CD8-positive, alpha-beta T cell (primary cell): ENCODE measurements at regions of chr10 and their contacts with region 1.

Region 1: DNA sequence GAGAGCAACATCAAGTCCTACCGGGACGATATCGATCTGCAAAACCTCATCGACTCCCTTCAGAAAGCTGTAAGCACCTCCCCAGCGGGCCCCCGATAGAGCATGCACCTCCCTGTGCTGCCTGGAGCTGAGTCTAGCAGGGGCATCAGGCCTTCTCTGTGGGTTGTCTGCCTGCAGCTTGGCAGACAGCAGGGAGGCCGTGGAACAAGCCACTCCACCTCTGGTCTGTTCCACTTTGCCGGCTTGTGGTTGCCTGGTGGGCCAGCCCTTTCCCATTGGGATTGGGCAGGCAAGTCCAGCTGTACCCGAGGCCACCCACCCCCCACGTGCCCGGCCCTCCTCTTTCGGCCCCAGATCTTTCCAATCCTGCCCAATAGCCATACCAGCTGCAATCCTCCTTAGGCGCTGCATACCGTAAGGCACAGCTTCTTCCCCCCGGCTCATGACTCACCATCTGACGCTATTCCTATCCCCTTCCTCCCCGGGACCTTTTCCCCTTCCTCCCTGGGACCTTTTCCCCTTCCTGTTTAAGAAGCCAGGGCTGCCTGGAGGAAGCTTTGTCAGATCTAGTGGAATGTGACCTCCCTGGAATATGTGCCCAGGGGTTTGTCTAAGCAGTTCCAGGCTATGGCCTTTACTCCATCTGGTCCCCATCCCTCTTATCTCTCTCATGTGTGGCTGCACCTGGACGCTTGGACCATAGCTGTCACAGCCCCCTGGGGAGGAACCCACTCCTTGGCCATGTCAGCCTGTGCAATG is 28.1 kb upstream of the SH2D4B start:
- DNase-seq: no peak
- ATAC-seq: no peak
- H3K4me3 ChIP-seq: no peak overlapping the region
- H3K4me3 Mint-ChIP-seq: no peak overlapping the region
- H3K27ac ChIP-seq: no peak overlapping the region
- H3K27ac Mint-ChIP-seq: peak overlapping the region; percentile 79
- H3K4me1 ChIP-seq: peaks cover 32% of the 10 kb centered on the region
- H3K4me1 Mint-ChIP-seq: peaks cover 42% of the 10 kb centered on the region
- H3K27me3 ChIP-seq: no peaks in the 10 kb centered on the region
- H3K27me3 Mint-ChIP-seq: no peaks in the 10 kb centered on the region
- CTCF ChIP-seq: no peak

Region 2: DNA sequence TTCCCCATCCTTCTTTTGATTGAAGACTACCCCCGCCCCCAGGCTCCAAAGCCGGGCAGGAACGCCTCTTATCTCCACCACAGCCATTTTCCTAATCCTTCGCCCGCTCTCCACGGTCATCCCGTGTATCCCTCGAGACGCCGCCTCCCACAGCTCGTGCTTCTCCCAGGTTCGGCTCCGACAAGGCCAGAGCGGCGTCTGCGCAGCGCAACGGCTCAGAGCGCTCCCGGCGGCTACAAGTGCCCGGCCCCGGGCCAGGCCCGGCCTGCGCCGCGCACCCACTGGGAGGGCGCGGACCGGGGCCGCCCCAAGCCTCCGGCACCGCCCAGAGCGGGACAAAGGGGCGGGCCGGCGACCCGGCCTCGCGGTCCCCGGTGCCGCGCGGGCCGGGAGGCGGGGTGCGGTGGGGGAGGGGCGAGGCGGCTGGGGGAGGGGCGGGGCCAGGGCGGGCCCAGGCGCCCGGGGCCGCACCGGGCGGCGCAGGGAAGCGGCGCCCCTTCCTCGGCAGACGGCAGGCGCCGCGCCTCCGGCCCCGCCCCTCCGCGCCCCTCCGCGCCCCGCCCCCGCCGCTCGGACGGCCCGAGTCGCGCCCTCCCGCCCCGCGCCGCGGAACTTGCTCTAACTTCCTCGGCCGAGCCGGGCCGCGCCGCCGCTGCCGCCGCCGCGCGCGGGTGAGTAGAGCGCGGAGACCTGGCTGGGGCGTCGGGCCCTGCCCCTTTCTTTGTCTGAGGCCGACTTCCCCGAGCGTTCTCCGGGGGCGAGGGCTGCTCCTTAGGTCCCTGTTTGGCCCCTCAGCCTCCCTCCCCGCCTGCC is 55.7 kb before region 1 on chr10 and contains the start of gene TSPAN14:
- CTCF ChIA-PET with region 1: interaction called, 562 read pairs
- POLR2A ChIA-PET with region 1: interaction called, 30 read pairs
- intact Hi-C with region 1: loop called in 1 of 2 experiments (anchors 2 kb)
- DNase-seq: peak; percentile 32 to 88 (median 73)
- ATAC-seq: peak; percentile 65
- H3K4me3 ChIP-seq: peak within 1 kb of the TSS; percentile 75 to 92
- H3K4me3 Mint-ChIP-seq: peak within 1 kb of the TSS; percentile 99
- H3K27ac ChIP-seq: peak within 1 kb of the TSS; percentile 53 to 74
- H3K27ac Mint-ChIP-seq: peak within 1 kb of the TSS; percentile 98
- H3K4me1 ChIP-seq: peaks cover 42% of the 10 kb centered on the region
- H3K4me1 Mint-ChIP-seq: peaks cover 41% of the 10 kb centered on the region
- H3K27me3 ChIP-seq: no peaks in the 10 kb centered on the region
- H3K27me3 Mint-ChIP-seq: no peaks in the 10 kb centered on the region
- CTCF ChIP-seq: no peak
- total RNA-seq, gene TSPAN14: 63.9 to 66.1 TPM

Region 3: DNA sequence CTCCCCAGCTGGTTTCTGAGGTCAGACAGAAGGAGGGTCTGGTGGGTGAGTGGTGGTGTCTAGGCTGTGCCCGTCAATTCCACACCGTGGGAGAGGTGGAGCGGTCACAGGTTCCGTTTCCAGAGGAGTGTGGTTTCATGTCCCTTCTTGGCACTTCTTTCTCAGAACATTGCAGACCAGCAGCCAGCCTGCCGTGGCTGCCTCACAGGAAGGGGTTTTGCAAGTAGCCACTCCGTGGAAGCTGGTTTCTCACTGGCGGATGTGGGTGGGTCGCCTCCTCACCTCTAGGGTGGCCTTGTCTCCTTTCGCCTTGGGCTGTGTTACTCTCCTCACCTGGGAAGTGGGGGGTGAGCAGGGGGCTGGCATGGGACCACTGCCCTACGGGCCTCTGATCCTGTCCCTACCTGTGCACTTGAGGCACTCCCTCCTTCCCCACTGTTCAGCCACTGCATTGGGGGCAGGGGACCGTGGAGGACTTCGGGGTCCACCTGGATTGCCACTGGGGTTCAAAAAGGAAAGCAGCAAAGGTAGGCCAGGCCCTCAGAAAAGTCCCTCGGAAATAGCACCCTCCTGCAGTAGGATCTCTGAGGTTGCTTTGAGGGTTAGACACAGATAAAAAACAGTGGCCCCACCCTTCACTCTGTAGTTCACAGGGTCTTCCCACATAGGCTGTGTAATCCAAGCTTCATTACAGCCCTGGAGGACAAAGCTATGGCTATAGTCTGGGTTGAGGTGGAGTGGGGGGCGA is 21.6 kb before region 1 on chr10:
- CTCF ChIA-PET with region 1: interaction called, 137 read pairs
- POLR2A ChIA-PET with region 1: interaction called, 107 read pairs
- intact Hi-C with region 1: loop called in 1 of 2 experiments (anchors 2 kb)
- DNase-seq: peak in 8 of 9 experiments; percentile 55 to 87 (median 74)
- ATAC-seq: peak; percentile 68
- H3K4me3 ChIP-seq: peak overlapping the region; percentile 15 to 29
- H3K4me3 Mint-ChIP-seq: peak overlapping the region; percentile 77
- H3K27ac ChIP-seq: peak overlapping the region; percentile 24 to 75
- H3K27ac Mint-ChIP-seq: peak overlapping the region; percentile 92
- H3K4me1 ChIP-seq: peaks cover 98% of the 10 kb centered on the region
- H3K4me1 Mint-ChIP-seq: peaks cover 96% of the 10 kb centered on the region
- H3K27me3 ChIP-seq: no peaks in the 10 kb centered on the region
- H3K27me3 Mint-ChIP-seq: no peaks in the 10 kb centered on the region
- CTCF ChIP-seq: no peak

Region 4: DNA sequence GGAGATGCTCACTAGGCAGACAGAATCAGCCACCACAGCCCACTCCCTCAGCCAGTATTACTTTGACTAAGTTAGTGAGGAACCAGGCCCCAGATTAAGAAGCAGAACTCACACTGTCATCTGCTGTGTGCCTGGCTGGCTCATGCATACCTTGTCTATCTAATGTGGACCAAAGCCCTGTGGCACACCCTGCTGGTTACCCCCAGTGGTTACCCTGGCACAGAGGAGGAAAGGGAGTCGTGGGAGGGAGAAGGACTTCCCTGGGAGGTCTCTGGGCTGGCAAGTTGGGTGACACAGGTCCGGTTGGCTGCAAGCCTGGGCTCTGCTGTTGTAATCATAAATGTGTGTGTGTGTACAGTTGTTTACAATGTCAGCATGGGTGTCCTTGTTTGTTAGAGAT is 20.7 kb after region 1 on chr10:
- CTCF ChIA-PET with region 1: interaction called, 6 read pairs
- POLR2A ChIA-PET with region 1: interaction called, 8 read pairs
- intact Hi-C with region 1: loop called (anchors 1 to 2 kb)
- DNase-seq: peak in 6 of 9 experiments; percentile 9 to 65 (median 42)
- ATAC-seq: peak; percentile 62
- H3K4me3 ChIP-seq: no peak overlapping the region
- H3K4me3 Mint-ChIP-seq: peak overlapping the region; percentile 72
- H3K27ac ChIP-seq: peak overlapping the region in 1 of 2 experiments; percentile 14
- H3K27ac Mint-ChIP-seq: peak overlapping the region; percentile 88
- H3K4me1 ChIP-seq: peaks cover 74% of the 10 kb centered on the region
- H3K4me1 Mint-ChIP-seq: peaks cover 71% of the 10 kb centered on the region
- H3K27me3 ChIP-seq: no peaks in the 10 kb centered on the region
- H3K27me3 Mint-ChIP-seq: no peaks in the 10 kb centered on the region
- CTCF ChIP-seq: peak; percentile 27

Region 5: DNA sequence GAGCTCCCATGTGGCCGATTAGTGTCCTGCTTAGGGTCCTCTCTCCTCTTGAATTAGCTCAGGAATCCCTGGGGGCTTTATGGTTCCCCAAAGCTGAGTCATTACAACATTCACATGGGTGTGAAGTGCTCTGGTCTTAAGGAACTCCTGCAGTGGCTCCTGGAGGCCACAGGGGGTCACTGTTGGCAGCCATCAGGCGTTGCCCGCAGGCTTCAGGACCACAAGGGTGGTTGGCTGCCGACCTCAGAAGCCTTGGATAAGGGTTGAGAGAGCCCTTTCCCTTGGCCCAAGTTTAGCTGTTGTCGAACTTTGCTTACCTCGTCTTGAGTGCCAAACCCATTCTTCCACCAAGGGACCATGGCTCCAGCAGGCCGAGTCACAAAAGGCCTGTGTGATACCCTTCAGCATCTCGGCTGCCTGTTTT is 89.9 kb after region 1 on chr10:
- CTCF ChIA-PET with region 1: interaction called, 18 read pairs
- POLR2A ChIA-PET with region 1: no interaction called
- intact Hi-C with region 1: no loop called
- DNase-seq: peak in 5 of 9 experiments; percentile 20 to 58 (median 45)
- ATAC-seq: peak; percentile 67
- H3K4me3 ChIP-seq: no peak overlapping the region
- H3K4me3 Mint-ChIP-seq: no peak overlapping the region
- H3K27ac ChIP-seq: no peak overlapping the region
- H3K27ac Mint-ChIP-seq: no peak overlapping the region
- H3K4me1 ChIP-seq: no peaks in the 10 kb centered on the region
- H3K4me1 Mint-ChIP-seq: no peaks in the 10 kb centered on the region
- H3K27me3 ChIP-seq: no peaks in the 10 kb centered on the region
- H3K27me3 Mint-ChIP-seq: no peaks in the 10 kb centered on the region
- CTCF ChIP-seq: peak; percentile 48